Activated CD8-positive, alpha-beta T cell treated with anti-CD3 and anti-CD28 coated beads, Interleukin-2, amount 10 ng/mL, durations not matched to agents 7 days and 5 days (primary cell): ENCODE measurements at regions of chr9 and their contacts with region 1.

Region 1: GRCh38 chr9:128117613-128118471 is 9.7 kb downstream of the PTGES2 start:
- DNase-seq: peak; percentile 98
- ATAC-seq: peak; percentile 90
- H3K4me3 Mint-ChIP-seq: no peak overlapping the region
- H3K27ac Mint-ChIP-seq: no peak overlapping the region
- H3K4me1 Mint-ChIP-seq: peaks cover 10% of the 10 kb centered on the region
- H3K27me3 Mint-ChIP-seq: no peaks in the 10 kb centered on the region

Region 2: DNA sequence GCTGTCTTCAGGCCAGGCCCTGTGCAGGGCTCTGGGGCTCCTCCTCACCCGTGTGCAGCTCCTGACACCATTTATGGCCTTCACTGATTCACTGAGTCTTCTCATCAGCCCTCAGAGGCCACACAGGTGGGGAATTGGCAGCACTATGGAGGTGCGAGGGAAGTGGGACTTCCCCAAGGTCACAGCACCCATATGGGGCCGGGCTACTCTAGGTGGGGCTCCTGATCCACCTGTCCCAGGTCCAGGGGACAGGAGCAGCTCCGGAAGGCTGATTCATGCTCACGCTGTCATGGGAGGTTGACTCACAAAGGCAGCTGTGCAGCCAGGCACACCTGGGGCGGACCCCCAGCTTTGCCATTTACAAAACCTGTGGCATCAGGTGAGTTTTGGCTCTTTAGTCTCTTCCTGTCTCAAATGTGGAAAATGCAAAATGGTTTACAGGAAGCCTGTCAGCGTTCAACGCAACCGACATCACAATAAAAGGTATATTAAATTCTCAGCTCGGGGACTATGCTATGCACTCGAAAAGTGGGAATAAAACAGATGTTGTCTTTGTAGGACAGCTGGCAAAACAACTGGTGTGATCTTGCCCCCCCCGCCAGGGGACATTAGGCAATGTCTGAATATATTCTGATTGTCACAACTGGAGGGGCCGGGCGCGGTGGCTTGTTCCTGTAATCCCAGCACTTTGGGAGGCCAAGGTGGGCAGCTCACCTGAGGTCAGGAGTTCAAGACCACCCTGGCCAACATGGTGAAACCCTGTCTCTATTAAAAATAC is 65.7 kb before region 1 on chr9:
- CTCF ChIA-PET with region 1: interaction called, 10 read pairs
- POLR2A ChIA-PET with region 1: no interaction called
- DNase-seq: no peak
- ATAC-seq: no peak
- H3K4me3 Mint-ChIP-seq: no peak overlapping the region
- H3K27ac Mint-ChIP-seq: no peak overlapping the region
- H3K4me1 Mint-ChIP-seq: peaks cover 7% of the 10 kb centered on the region
- H3K27me3 Mint-ChIP-seq: no peaks in the 10 kb centered on the region

Region 3: DNA sequence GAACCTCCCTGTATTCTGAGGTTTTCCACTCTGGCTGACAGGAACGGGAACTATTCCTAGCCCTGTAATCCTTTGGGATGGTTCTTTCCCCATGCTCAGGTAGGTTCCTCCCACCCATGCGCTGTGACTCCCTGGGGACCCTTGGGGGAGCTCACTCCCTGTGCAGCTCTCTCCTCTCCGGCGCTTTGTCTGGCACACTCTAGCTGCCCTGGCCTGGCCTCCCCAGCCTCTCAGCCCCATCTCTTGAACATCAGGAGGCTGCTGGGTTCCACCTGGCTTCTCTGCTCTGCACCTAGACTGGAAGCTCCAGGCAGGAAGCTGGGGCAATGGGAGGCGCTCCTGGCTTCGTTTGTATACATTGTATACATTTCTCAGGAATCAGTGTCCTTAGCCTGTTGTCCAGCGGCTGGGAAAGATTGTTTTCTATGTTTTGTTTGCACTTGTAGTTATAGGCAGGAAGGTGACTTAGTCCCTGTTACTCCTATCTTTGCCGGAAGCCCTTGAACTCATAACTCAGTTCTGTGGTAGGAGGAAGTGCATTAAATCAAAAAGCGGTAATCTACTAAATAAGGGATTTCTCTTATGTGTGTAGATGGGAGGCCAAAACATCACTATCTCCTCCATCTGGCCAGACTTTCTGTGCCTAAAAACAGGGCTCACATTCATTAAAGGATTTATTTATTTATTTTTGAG is 29.4 kb before region 1 on chr9:
- CTCF ChIA-PET with region 1: interaction called, 30 read pairs
- POLR2A ChIA-PET with region 1: interaction called, 3 read pairs
- DNase-seq: no peak
- ATAC-seq: peak; percentile 48
- H3K4me3 Mint-ChIP-seq: no peak overlapping the region
- H3K27ac Mint-ChIP-seq: peak overlapping the region; percentile 50
- H3K4me1 Mint-ChIP-seq: peaks cover 50% of the 10 kb centered on the region
- H3K27me3 Mint-ChIP-seq: no peaks in the 10 kb centered on the region

Region 4: GRCh38 chr9:128103589-128103962 is 14.3 kb before region 1 on chr9:
- CTCF ChIA-PET with region 1: interaction called, 24 read pairs
- POLR2A ChIA-PET with region 1: no interaction called
- DNase-seq: peak; percentile 63
- ATAC-seq: peak; percentile 69
- H3K4me3 Mint-ChIP-seq: no peak overlapping the region
- H3K27ac Mint-ChIP-seq: peak overlapping the region; percentile 88
- H3K4me1 Mint-ChIP-seq: peaks cover 51% of the 10 kb centered on the region
- H3K27me3 Mint-ChIP-seq: no peaks in the 10 kb centered on the region

Region 5: GRCh38 chr9:128254855-128255759 is 137.3 kb after region 1 on chr9:
- CTCF ChIA-PET with region 1: no interaction called
- POLR2A ChIA-PET with region 1: no interaction called
- DNase-seq: peak; percentile 69
- ATAC-seq: peak; percentile 27
- H3K4me3 Mint-ChIP-seq: no peak overlapping the region
- H3K27ac Mint-ChIP-seq: no peak overlapping the region
- H3K4me1 Mint-ChIP-seq: peaks cover 5% of the 10 kb centered on the region
- H3K27me3 Mint-ChIP-seq: peaks cover 14% of the 10 kb centered on the region